Activated T-helper 2 cell treated with anti-CD3 and anti-CD28 coated beads, Interferon-gamma antibody, Interleukin-2, Interleukin-4, amounts not matched to agents 10 μg/mL and 5 μg/mL and 100 μg/mL, durations not matched to agents 14 hours and 24 hours and 36 hours (primary cell): ENCODE measurements at regions of chr12 and their contacts with region 1.

Region 1: DNA sequence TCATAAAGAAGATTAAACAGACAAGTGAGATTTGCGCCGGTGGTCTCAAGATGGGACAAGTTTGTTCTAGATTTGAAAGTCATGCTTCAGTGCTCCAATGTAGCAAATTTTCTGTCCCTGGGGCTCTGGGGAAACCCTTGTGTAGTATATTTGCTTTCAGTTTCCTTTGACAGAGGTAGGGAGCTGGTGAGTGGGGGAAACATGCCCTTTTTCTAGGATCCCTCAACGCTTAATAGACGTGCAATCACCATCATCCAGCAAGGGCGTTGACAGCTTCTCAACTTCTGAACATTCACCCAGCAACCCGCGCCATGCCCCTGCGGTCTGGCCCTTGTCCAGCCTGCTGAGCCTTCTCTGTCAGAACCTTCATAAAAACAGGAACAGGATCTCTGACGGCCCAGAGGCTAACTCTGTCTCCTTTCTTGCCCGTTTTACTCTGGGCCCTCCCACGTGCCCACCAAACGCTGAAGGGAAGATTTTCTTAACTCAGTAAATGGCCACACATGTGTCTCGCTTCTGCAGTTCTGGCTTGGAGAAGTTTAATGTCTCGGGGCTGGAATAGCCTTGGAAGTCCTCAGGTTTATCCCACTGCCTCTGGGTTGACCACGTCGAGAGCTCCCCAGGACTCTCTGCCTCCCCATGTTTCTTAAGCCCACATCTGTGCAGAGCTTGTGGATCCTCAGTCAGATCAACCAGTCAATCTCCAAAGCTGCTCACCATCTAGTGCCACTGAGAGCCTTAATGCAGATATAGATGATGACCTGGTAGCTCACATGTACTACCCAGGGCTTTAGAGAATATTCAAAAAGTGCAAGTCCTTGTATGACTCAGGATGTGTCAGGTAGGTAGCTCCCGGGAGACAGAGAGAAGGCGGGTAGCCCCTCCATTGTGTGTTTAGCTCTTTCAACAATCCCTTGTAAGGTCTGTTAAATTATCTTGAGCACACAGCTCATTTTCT is 58.1 kb upstream of the CCND2 start:
- DNase-seq: peak; percentile 22
- H3K4me3 Mint-ChIP-seq: peak overlapping the region; percentile 46
- H3K27ac Mint-ChIP-seq: peak overlapping the region; percentile 70
- H3K4me1 Mint-ChIP-seq: peaks cover 46% of the 10 kb centered on the region
- H3K27me3 Mint-ChIP-seq: peaks cover 2% of the 10 kb centered on the region

Region 2: DNA sequence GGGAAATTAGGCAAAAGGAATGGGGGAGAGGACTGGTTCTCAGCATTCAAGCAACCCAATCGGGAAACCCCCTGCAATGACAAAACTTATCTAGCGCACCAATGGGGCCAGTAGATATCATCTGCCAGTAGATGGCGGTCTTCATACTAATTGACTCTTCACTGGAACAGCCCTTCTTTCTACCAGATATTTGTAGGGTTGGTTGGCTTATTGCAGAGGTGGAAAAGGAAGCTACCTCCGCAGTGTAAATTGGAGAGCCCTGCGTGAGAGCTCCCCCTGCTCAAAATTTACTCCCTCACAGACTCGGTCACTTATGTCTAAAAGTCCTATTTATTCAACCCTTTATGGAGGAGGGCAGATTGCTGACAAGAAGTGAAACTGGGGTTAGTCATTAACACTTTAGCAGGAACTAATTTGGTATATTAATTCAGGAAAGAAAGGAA is 108.1 kb before region 1 on chr12:
- intact Hi-C with region 1: loop called (anchors 1 kb)
- DNase-seq: peak; percentile 75
- H3K4me3 Mint-ChIP-seq: peak overlapping the region; percentile 10
- H3K27ac Mint-ChIP-seq: peak overlapping the region; percentile 73
- H3K4me1 Mint-ChIP-seq: peaks cover 53% of the 10 kb centered on the region
- H3K27me3 Mint-ChIP-seq: peaks cover 4% of the 10 kb centered on the region

Region 3: DNA sequence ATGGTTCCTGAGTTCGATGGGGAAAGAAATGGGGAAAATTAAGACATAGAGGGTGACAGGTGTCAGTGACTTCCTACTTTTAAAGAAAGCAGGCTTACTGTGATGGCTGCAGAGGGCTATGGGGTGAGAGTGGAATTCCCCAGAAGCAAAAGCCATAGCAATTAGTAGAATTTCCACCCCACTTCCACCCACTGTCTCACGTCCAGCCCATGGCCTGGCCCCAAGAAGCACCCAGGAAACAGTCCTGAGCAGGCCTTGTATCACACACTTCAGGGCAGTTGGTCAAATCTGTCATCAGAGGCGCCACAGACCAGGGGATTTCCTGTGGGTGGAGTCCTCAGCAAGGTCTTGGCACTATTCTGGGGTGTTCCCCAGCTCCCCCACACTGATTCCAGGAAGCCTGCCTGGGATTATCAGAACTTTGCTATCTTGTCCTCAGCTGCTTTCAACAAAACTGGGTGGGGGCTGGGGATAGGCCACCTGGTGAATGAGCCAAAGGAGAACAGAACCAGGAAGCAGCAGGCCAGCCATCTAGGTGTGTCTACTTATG is 62.1 kb before region 1 on chr12:
- intact Hi-C with region 1: no loop called
- DNase-seq: peak; percentile 67
- H3K4me3 Mint-ChIP-seq: peak overlapping the region; percentile 49
- H3K27ac Mint-ChIP-seq: peak overlapping the region; percentile 95
- H3K4me1 Mint-ChIP-seq: peaks cover 73% of the 10 kb centered on the region
- H3K27me3 Mint-ChIP-seq: no peaks in the 10 kb centered on the region